Left cardiac atrium (tissue), 4 donors: ENCODE measurements at regions of chr5 and their contacts with region 1.

Region 1: DNA sequence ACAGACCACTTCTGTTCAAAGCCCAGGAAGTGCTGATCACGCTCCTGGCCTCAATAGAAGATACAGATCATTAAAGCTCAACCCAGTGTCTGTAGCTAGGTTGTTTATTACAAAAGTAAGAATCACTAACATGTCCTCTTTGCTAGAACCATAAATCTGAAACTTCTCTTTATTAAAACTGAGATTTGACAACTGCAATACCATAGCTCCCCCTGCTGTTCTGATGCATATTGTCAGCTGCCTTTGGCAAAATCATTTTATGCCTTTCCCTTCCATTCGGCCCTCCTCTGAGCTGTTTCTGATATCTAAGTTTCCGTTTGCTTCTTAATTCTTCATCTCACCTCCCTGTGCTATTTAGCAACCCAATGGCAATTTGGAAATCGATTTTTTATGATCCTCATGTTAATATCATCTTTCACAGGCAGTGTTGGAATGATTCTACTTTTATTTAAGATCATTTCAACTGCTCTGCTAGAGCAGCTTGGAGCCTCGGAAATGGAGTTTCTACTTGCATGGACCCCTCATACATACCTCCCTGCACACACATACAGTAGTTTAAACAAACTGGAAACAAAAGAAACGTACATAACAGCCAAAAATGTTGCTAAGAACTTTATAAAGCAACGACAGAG is 998.8 kb downstream of the MAT2B start:
- DNase-seq: no peak
- ATAC-seq: no peak

Region 2: GRCh38 chr5:163564321-163564938 is 939.8 kb before region 1 on chr5:
- intact Hi-C with region 1: loop called (anchors 2 to 5 kb)
- DNase-seq: peak; percentile 29
- ATAC-seq: peak in 1 of 2 donors; percentile 50

Region 3: DNA sequence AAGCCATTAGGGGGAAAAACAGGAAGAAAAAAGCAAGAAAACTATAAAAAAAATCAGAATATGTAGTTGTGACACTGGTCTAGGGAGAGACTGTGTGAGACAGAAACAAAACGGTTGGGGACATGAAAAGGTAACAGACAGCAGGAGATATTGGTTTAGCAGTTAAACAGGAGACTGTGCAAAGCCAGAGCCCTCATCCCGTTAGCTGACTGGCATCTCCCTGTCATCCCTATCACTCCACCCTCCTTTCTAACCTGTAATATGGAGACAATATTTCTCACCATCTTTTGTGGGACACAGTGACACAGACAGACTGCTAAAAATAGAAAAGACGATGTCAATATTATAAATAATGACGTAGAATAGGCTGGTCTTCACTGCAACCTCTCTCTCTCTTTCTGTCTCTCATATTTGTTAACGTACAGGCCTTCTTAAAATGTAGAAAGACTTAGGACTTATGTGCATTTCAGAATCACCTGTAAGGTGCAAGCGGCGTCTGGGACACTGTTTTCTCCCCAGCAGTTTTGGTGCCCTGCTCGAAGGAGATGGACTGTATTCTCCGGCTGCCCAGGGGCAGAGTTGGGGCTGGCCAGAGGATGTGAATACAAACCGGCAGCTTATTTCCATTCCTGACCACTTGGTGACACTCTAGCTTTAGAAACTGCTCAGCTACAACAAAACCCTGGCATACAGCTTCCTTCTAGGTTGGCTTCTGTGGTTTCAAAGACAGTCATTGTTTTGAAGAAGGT is 808.3 kb before region 1 on chr5:
- intact Hi-C with region 1: loop called (anchors 5 to 10 kb)
- DNase-seq: peak; percentile 24
- ATAC-seq: peak; percentile 76 to 89

Region 4: GRCh38 chr5:164013077-164013670 is 491.1 kb before region 1 on chr5:
- intact Hi-C with region 1: loop called in 1 of 2 experiments (anchors 2 kb)
- DNase-seq: peak; percentile 27
- ATAC-seq: peak; percentile 33 to 47

Region 5: GRCh38 chr5:164048359-164048926 is 455.8 kb before region 1 on chr5:
- intact Hi-C with region 1: loop called in 1 of 2 experiments (anchors 10 kb)
- DNase-seq: no peak
- ATAC-seq: no peak